AG04449 (cell line): ENCODE measurements at regions of chr5 and their contacts with region 1.

Region 1: DNA sequence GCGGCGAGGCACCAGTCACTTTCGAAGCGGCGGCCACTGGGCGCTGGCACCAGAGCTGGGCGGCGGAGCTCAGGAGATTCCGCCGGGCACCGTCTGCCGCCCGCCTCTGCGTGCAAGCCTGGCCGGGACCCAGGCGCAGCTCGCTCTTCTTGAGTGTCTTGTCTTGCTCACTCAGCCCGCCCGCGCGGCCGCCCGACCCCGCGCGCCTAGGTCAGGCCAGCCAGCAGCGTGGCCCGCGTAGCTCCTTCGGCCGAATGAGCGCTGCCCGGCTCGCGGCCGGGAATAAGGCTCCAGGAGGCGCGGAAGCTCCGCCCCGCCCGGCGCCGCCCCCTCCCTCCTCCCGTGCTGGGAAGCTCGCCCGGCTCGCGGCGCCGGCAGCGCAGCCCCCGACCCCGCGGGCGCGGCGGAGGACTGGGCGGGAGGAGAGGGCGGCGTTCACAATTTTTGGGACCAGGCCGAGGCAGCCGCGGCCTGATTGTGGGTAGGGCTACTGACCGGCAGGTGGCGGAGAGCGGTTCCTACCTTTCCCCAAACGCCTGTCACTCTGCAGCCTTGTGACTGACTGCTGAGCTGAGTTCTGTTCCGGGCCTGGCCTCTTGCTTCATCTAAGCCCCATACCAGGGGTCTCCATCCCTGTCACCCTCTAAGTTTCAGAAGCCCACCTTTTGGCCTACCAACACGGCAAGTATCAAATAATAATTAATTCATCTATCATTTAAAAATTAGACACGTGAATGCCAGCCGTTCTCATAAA is at the start of gene HBEGF:
- DNase-seq: no peak
- H3K4me3 ChIP-seq: peak within 1 kb of the TSS; percentile 79
- CTCF ChIP-seq: peak; percentile 46

Region 2: DNA sequence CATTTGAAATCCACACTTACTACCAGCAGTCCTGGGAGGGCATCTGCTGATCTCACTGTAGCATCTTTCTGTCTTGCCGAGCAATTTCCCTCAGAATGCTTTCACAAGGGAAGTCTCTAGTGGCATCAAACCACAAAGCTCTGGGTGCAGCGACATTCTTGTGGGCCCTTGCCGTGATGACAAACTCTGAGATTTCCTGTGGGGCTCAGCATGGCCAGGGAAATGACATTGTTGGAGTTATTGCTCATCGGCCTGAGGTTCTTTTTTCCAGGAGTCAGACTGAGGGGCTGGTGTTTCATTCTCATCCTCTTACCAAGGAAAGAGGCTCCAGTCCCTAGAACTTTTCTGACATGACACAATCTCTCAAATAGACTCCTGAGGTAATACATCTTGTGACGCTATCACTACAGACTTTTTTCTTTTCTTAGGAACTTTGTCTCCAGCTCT is 95.0 kb before region 1 on chr5:
- CTCF ChIA-PET with region 1: interaction called, 1,796 read pairs
- POLR2A ChIA-PET with region 1: interaction called, 64 read pairs
- DNase-seq: peak; percentile 84
- H3K4me3 ChIP-seq: no peak overlapping the region
- CTCF ChIP-seq: no peak

Region 3: DNA sequence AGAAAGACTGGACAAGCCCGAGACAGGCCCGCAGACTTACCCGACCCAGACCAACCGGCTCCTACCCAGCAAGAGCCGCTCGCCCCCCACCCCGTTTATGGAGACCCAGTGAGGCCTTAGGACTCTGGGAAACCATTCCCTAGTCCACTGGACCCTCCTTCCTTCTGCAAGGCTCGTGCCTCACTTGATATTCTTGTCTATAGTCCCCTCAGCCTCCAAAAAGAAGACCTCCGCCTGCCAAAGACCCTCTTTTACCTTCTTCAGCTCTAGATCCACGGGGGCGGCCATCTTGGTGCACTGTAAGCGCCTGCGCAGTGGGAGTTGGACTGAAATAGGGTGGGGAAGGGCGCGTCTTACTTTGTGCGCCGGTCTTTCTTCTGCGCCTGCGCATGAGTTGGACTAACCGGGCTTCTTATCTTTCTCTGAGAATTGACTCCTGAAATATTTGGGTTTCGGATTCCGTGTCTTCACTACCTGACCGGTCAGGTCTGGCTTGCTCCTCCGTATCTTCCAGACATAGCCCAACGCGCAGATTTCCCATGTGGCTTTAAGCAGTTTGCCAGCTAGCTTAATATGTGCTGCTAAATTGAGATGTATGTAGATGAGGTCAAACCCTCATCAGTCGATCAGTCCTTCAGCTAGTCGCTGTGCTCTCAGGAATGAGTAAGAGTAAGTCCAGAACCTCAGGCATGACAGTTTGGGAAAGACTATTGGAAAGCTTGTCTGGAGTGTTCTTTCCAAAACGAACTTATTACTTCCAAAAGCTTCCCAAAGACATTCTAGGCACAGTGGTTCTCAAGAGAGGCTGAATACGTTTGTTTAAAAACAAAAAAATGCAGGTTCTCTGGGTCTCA is 43.5 kb before region 1 on chr5 and contains the start of gene PFDN1:
- CTCF ChIA-PET with region 1: interaction called, 11 read pairs
- POLR2A ChIA-PET with region 1: interaction called, 12 read pairs
- DNase-seq: peak; percentile 69
- H3K4me3 ChIP-seq: peak within 1 kb of the TSS; percentile 83
- CTCF ChIP-seq: no peak

Region 4: DNA sequence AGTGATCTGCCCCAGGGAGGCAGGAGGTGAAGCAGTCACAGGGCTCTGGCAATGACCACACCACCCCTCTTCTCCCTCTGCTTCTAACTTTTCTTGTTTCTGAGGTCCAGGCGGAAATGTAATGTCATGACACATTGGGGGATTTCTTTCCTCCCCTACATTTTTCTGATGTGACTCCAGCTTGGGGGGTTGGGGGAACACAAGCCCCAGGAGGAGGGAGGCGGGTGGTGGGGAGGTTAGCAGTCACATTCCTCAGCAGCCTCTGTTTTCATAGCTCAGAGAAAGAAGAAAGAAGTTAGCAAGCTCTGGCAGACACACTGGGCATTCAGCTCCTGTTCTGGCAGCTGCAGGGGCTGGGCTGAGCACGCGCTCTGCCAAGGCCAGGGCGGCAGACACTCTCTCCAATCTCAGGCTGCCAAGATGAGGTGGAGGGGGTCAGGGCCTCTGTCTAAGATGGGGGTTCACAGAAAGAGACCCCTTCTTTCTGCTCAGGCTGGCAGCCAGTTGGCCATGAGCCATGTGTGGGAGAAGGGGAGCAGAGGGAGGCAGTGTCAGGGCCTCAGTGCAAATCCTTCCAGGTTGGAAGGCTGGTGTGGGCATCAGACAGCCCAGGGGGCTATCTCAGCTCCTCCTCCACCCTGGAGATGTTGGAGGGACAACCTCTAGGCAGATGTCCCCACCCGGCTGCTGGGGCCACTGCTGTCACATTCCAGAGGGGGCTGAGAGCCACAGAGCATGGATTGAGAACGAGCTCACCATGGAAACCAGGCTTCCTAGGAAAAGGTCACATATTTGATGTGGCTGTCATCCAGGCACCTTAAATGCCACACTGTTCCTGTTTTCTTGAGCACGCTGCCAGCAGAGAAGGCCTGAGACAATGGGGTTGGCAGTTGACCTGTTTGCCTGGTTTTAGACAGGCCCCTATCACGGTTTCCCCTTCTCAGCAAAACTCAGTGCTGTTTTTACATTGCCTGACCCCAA is 23.5 kb before region 1 on chr5:
- CTCF ChIA-PET with region 1: interaction called, 28 read pairs
- POLR2A ChIA-PET with region 1: interaction called, 20 read pairs
- DNase-seq: peak; percentile 89
- H3K4me3 ChIP-seq: peak overlapping the region; percentile 21
- CTCF ChIP-seq: no peak

Region 5: DNA sequence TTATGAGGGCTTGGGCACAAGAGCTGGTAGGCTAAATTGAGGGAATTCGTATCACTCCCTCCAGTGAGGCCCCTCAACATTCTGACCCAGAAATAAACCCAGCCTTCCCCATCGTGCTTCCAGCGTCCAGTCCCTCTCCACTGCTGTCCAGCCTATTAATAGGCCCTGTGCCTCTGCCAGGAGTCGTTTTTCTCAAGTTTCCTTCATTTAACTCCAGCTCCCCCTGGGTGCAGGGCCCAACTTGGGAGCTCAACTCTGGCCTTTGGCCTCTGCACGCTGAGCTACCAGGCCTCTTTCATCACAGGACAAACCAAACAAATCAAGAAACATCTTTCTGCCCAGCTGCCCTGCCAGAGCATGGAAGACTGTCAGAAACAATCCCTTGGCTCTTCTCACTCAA is 10.1 kb before region 1 on chr5:
- CTCF ChIA-PET with region 1: interaction called, 34 read pairs
- POLR2A ChIA-PET with region 1: interaction called, 13 read pairs
- DNase-seq: no peak
- H3K4me3 ChIP-seq: no peak overlapping the region
- CTCF ChIP-seq: no peak

Region 6: DNA sequence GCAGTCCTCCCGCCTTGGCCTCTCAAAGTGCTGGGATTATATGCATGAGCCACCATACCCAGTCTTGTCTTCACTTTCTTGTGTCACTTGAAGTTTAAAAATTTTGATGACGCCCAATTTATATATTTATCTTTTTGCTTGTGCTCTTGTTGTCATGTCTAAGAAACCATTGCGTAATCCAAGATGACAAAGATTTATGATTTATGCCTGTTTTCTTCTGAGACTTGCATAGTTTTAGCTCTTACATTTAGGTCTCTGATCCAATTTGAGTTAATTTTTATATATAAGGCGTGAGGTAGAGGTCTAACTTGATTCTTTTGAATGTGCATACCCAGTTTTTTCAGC is 73.7 kb after region 1 on chr5:
- CTCF ChIA-PET with region 1: no interaction called
- POLR2A ChIA-PET with region 1: no interaction called
- DNase-seq: no peak
- H3K4me3 ChIP-seq: no peak overlapping the region
- CTCF ChIP-seq: no peak